ENCODE measurements at regions of chr17 and their contacts with region 1.

Region 1: GRCh38 chr17:40340880-40341807 is 23.4 kb downstream of the GJD3 start:
- DNase-seq: peak; percentile 79
- ATAC-seq: peak; percentile 80
- H3K4me3 ChIP-seq: peak overlapping the region; percentile 60 to 68
- H3K27ac ChIP-seq: peak overlapping the region; percentile 72
- H3K4me1 ChIP-seq: peaks cover 24 to 60% of the 10 kb centered on the region in 2 experiments
- H3K27me3 ChIP-seq: no peaks in the 10 kb centered on the region
- CTCF ChIP-seq: no peak
- POLR2A ChIP-seq: no peak
- RAD21 ChIP-seq: no peak

Region 2: GRCh38 chr17:40317880-40318829 is 23.0 kb before region 1 on chr17:
- CTCF ChIA-PET with region 1: no interaction called
- POLR2A ChIA-PET with region 1: interaction called, 3 read pairs
- RAD21 ChIA-PET with region 1: interaction called in 1 of 2 experiments, 3 read pairs
- intact Hi-C with region 1: loop called (anchors 2 kb)
- DNase-seq: peak; percentile 88
- ATAC-seq: peak; percentile 81
- H3K4me3 ChIP-seq: peak overlapping the region; percentile 94 to 95
- H3K27ac ChIP-seq: peak overlapping the region; percentile 91
- H3K4me1 ChIP-seq: peaks cover 68 to 90% of the 10 kb centered on the region in 2 experiments
- H3K27me3 ChIP-seq: no peaks in the 10 kb centered on the region
- CTCF ChIP-seq: no peak
- POLR2A ChIP-seq: no peak
- RAD21 ChIP-seq: no peak

Region 3: DNA sequence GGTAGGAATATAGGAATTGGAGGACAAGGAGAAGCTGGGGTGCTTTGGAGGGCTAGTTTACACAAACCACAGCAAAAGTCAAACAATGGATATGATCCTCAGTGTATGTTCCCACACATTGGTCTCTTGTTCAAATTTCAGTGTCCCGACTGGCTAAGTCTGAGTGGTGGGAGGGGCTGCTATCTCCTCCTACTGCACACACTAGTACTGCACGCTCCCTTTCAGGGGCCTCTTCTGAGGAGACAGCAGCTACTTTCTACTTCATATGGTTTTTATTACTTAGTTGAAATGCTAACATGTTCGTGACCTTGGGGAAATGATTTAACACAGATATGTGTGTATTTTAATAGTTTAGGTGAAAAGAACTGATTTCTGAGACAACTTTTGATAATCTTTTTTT is 500.1 kb after region 1 on chr17:
- CTCF ChIA-PET with region 1: no interaction called
- POLR2A ChIA-PET with region 1: no interaction called
- RAD21 ChIA-PET with region 1: no interaction called
- intact Hi-C with region 1: no loop called
- DNase-seq: no peak
- ATAC-seq: no peak
- H3K4me3 ChIP-seq: no peak overlapping the region
- H3K27ac ChIP-seq: no peak overlapping the region
- H3K4me1 ChIP-seq: no peaks in the 10 kb centered on the region
- H3K27me3 ChIP-seq: no peaks in the 10 kb centered on the region
- CTCF ChIP-seq: no peak
- POLR2A ChIP-seq: no peak
- RAD21 ChIP-seq: no peak